ENCODE measurements at regions of chr12 and their contacts with region 1.

Region 1: GRCh38 chr12:46382964-46383653 is 10.5 kb upstream of the SLC38A2 start:
- DNase-seq: peak; percentile 99
- ATAC-seq: peak; percentile 95

Region 2: GRCh38 chr12:45388545-45388944 is 994.6 kb before region 1 on chr12:
- intact Hi-C with region 1: no loop called
- DNase-seq: no peak
- ATAC-seq: peak; percentile 70

Region 3: DNA sequence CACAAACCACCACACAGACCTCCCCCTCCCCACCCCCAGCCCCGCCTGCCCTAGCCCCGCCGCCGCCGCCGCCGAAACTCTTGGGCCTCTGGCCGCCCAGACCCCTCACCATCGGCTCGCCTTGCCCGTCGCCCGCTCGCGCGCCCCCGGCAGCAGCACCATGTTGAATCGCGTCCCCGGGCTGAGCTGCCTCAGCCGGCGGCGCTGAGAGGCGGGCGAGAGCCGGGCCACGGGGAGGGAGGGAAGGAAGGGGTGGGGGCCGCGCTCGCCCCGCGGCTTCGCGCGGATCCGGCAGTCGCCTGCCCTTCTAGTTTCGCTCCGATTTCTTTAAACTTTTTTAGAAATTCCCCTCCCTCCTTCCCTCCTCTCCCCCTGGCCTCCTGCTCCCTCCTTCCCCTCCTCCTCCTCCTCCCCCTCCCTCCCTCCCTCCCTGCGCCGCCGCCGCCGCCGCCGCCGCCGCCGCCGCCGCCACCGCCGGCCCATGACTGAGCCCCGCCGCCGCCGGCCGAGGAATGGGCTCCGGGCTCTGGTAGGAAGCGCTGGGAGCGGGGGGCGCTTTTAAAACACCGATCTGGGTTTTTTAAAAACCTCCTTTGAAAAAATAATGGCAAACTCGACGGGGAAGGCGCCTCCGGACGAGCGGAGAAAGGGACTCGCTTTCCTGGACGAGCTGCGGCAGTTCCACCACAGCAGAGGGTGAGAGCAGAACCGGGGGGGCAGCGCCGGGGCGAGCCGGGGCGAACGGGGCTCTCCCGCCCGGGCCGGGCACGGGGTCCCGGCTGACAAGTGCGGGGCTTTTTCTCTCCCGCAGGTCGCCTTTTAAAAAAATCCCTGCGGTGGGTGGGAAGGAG is 653.7 kb before region 1 on chr12 and contains the start of gene ARID2:
- intact Hi-C with region 1: loop called (anchors 5 kb)
- DNase-seq: peak; percentile 85
- ATAC-seq: no peak
- total RNA-seq, gene ARID2: 42.8 TPM

Region 4: DNA sequence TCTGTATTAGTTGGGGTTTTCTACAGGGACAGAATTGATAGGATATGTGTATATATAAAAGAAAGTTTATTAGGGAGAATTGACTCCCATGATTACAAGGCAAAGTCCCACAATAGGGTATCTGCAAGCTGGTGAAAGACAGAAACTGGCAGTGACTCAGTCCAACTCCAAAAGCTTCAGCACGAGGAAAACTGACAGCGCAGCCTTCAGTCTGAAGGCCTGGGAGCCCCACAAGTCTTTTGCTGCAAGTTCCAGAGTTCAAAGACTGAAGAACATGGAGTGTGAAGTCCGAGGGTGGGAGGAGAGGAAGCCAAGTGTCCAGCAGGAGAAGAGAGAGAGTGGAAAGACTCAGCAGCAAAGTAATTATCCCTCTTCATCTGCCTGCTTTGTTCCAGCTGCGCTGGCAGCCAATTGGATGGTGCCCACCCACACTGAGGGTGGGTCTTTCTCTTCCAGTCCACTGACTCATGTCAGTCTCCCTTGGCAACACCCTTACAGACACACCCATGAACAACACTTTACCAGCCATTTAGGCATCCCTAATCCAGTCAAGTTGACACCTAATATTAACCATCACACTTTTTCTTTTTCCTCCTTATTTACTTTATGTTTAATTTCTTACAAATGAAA is 282.1 kb before region 1 on chr12:
- intact Hi-C with region 1: no loop called
- DNase-seq: no peak
- ATAC-seq: no peak

Region 5: GRCh38 chr12:46164169-46164761 is 218.8 kb before region 1 on chr12:
- intact Hi-C with region 1: no loop called
- DNase-seq: no peak
- ATAC-seq: no peak

Region 6: GRCh38 chr12:46332260-46332659 is 50.8 kb before region 1 on chr12:
- intact Hi-C with region 1: no loop called
- DNase-seq: no peak
- ATAC-seq: no peak